BJ (cell line): ENCODE measurements at regions of chr12 and their contacts with region 1.

Region 1: GRCh38 chr12:121536899-121537813 is 43.7 kb downstream of the KDM2B start:
- DNase-seq: no peak
- H3K4me3 ChIP-seq: peak overlapping the region; percentile 43
- H3K27me3 ChIP-seq: no peaks in the 10 kb centered on the region
- CTCF ChIP-seq: no peak

Region 2: GRCh38 chr12:121494093-121494787 is 42.9 kb before region 1 on chr12:
- CTCF ChIA-PET with region 1: interaction called, 11 read pairs
- POLR2A ChIA-PET with region 1: no interaction called
- DNase-seq: no peak
- H3K4me3 ChIP-seq: no peak overlapping the region
- H3K27me3 ChIP-seq: no peaks in the 10 kb centered on the region
- CTCF ChIP-seq: peak; percentile 94